GM12878 (cell line): ENCODE measurements at regions of chr4 and their contacts with region 1.

Region 1: GRCh38 chr4:105666693-105667092 is 41.8 kb downstream of the INTS12 start:
- DNase-seq: no peak
- ATAC-seq: peak; percentile 85
- H3K4me3 ChIP-seq: no peak overlapping the region
- H3K27ac ChIP-seq: no peak overlapping the region
- H3K4me1 ChIP-seq: no peaks in the 10 kb centered on the region
- H3K27me3 ChIP-seq: no peaks in the 10 kb centered on the region
- CTCF ChIP-seq: peak; percentile 28 to 44 (median 34); a peak in 4 of 6 replicates
- EP300 ChIP-seq: no peak
- POLR2A ChIP-seq: no peak
- RAD21 ChIP-seq: peak; percentile 72

Region 2: GRCh38 chr4:105453550-105454205 is 213.0 kb before region 1 on chr4:
- CTCF ChIA-PET with region 1: no interaction called
- POLR2A ChIA-PET with region 1: no interaction called
- RAD21 ChIA-PET with region 1: no interaction called
- SMC1A ChIA-PET with region 1: no interaction called
- in situ Hi-C with region 1: no loop called
- intact Hi-C with region 1: no loop called
- DNase-seq: no peak
- ATAC-seq: peak; percentile 95
- H3K4me3 ChIP-seq: no peak overlapping the region
- H3K27ac ChIP-seq: no peak overlapping the region; the same call in 1 of the 2 replicates
- H3K4me1 ChIP-seq: no peaks in the 10 kb centered on the region
- H3K27me3 ChIP-seq: no peaks in the 10 kb centered on the region
- CTCF ChIP-seq: peak in 2 of 3 experiments; percentile 9 to 39; a peak in 2 of 6 replicates
- EP300 ChIP-seq: peak; percentile 66 to 72; a peak in 2 of 4 replicates
- POLR2A ChIP-seq: no peak
- RAD21 ChIP-seq: 0 out of 2 replicates have a peak, but pooled peaks have one; percentile 22

Region 3: DNA sequence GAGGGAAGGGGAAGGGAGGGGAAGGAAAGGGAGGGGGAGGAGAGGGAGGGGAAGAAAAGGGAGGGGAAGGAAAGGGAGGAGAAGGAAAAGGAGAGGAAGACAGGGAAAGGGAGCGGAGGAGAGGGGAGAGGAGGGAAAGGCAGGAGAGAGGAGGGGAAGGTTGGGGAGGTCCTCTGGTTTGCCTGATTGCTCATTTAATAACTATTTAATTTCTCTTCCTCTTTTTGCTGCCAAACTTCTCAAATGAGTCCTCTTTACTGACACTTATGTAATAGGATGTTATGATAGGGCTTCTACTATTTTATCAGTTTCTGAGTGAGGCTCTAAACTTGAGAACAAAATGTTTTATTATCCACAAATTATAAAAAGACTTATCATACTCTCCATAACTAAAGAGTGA is 157.4 kb before region 1 on chr4:
- CTCF ChIA-PET with region 1: interaction called, 7 read pairs
- POLR2A ChIA-PET with region 1: no interaction called
- RAD21 ChIA-PET with region 1: interaction called, 3 read pairs
- SMC1A ChIA-PET with region 1: interaction called, 15 read pairs
- in situ Hi-C with region 1: no loop called
- intact Hi-C with region 1: no loop called
- DNase-seq: peak; percentile 20
- ATAC-seq: peak; percentile 96
- H3K4me3 ChIP-seq: no peak overlapping the region
- H3K27ac ChIP-seq: no peak overlapping the region
- H3K4me1 ChIP-seq: peaks cover 8% of the 10 kb centered on the region; the same call in 1 of the 2 replicates
- H3K27me3 ChIP-seq: no peaks in the 10 kb centered on the region
- CTCF ChIP-seq: no peak
- EP300 ChIP-seq: peak; percentile 18 to 78; a peak in 2 of 4 replicates
- POLR2A ChIP-seq: no peak
- RAD21 ChIP-seq: no peak

Region 4: DNA sequence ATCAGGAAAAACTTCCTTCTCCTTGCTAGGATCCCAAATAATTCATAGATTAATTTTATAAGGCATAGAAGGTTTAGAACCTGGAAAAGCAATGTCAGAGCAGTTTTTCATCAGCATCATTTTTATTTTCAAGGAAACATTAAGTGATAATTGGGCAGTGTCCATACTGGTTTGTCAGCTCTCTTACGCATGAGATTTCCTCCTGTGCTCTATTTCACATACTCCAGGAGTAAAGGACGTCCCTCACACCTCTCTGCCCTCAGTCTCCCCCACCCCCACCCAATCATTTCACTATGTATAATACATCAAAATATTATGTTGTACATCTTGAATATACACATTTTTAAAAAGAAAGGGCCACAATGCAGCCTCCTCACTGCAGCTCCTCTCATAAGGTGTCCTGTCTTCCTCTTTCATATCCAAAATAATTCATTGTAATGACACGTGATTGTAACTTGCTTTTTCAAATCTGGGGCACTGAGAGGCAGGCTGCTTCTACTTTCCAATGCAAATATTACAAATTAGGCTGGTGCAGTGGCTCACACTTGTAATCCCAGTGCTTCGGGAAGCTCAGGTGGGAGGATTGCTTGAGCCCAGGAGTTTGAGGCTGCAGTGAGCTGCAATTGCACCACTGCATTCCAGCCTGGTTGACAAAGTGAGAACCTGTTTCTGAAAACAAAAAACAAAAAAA is 79.9 kb before region 1 on chr4:
- CTCF ChIA-PET with region 1: interaction called, 14 read pairs
- POLR2A ChIA-PET with region 1: no interaction called
- RAD21 ChIA-PET with region 1: interaction called, 18 read pairs
- SMC1A ChIA-PET with region 1: interaction called, 41 read pairs
- in situ Hi-C with region 1: no loop called
- intact Hi-C with region 1: no loop called
- DNase-seq: no peak
- ATAC-seq: peak; percentile 61
- H3K4me3 ChIP-seq: no peak overlapping the region
- H3K27ac ChIP-seq: no peak overlapping the region
- H3K4me1 ChIP-seq: peaks cover 10% of the 10 kb centered on the region; the same call in 1 of the 2 replicates
- H3K27me3 ChIP-seq: no peaks in the 10 kb centered on the region
- CTCF ChIP-seq: no peak; a peak in 1 of 6 replicates
- EP300 ChIP-seq: no peak
- POLR2A ChIP-seq: no peak
- RAD21 ChIP-seq: 0 out of 2 replicates have a peak, but pooled peaks have one; percentile 9

Region 5: GRCh38 chr4:105631818-105632400 is 34.8 kb before region 1 on chr4:
- CTCF ChIA-PET with region 1: interaction called, 32 read pairs
- POLR2A ChIA-PET with region 1: no interaction called
- RAD21 ChIA-PET with region 1: interaction called, 23 read pairs
- SMC1A ChIA-PET with region 1: interaction called, 130 read pairs
- in situ Hi-C with region 1: no loop called
- intact Hi-C with region 1: no loop called
- DNase-seq: no peak
- ATAC-seq: peak; percentile 20; the same call in 2 of the 3 replicates
- H3K4me3 ChIP-seq: no peak overlapping the region
- H3K27ac ChIP-seq: no peak overlapping the region
- H3K4me1 ChIP-seq: peaks cover 15% of the 10 kb centered on the region
- H3K27me3 ChIP-seq: no peaks in the 10 kb centered on the region
- CTCF ChIP-seq: no peak
- EP300 ChIP-seq: no peak
- POLR2A ChIP-seq: no peak
- RAD21 ChIP-seq: no peak

Region 6: DNA sequence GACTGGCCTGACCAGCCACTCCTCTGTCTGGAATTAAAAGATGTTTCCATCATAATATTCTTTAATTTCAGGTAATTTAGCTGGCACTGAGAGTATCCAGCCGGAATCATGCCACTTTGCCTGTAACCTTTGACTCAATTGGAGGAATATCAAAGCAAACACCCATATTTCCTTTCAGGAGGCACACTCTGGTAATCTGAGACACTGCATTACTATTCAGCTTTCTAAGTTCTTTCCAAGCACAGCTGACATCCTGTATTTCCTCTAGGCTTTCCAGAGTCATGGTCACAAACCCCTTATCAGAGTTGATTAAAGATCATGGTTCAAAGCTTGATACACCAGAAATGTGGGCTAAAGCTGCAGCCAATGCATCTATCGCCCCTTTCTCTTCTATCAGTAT is 12.5 kb after region 1 on chr4:
- CTCF ChIA-PET with region 1: interaction called, 7 read pairs
- POLR2A ChIA-PET with region 1: no interaction called
- RAD21 ChIA-PET with region 1: no interaction called
- SMC1A ChIA-PET with region 1: interaction called, 13 read pairs
- in situ Hi-C with region 1: no loop called
- intact Hi-C with region 1: no loop called
- DNase-seq: no peak
- ATAC-seq: no peak
- H3K4me3 ChIP-seq: no peak overlapping the region
- H3K27ac ChIP-seq: no peak overlapping the region
- H3K4me1 ChIP-seq: no peaks in the 10 kb centered on the region
- H3K27me3 ChIP-seq: no peaks in the 10 kb centered on the region
- CTCF ChIP-seq: no peak
- EP300 ChIP-seq: no peak
- POLR2A ChIP-seq: no peak
- RAD21 ChIP-seq: no peak